ENCODE measurements at regions of chr19 and their contacts with region 1.

Region 1: DNA sequence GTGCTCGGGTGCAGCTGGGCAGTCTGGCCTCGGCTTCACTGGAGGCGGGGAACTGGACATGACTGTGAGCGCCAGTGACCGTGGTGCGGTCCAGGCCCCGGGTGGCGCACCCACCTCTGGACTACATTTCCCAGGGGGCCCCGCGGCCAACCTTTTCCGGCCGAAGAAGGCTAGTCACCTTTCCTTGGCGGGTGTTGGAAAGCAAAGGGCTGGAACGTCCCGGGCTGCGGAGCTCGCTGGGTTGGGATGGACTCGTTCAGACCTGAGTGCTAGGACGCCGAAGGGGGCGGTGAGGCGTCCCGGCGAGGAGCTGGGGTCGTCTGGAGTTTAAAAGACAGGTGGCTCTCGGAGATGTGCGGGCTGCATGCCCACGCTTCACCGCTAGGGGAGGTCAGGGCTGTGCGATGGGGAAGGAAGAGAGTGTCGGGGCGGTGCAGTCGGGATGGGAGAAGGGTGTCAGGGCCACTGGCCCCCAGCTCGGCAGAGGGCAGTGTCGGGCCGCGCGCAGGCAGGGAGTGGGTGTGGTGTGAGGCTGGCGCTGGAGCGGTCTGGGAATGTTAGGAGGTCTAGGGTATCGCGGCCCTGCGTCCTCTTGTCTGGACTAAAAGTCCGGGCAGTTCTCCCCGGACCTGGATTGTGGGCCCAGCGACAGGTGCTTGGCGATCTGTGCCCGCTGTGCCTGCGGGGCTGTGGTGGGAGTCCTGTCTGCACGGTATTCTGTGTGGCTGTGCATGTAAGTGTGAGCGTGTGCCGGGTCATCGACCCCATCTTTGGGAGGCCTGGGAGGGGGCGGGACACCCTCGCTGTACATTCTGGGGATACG is 57.1 kb downstream of the ZNF568 start:
- DNase-seq: peak; percentile 76 to 85 (median 77)
- H3K4me3 ChIP-seq: peak overlapping the region; percentile 80 to 86
- H3K4me3 Mint-ChIP-seq: peak overlapping the region; percentile 91 to 98 (median 96)
- H3K27ac ChIP-seq: peak overlapping the region; percentile 68
- H3K27ac Mint-ChIP-seq: peak overlapping the region; percentile 82 to 97 (median 94)
- H3K4me1 ChIP-seq: peaks cover 16% of the 10 kb centered on the region
- H3K4me1 Mint-ChIP-seq: peaks cover 8 to 22% (median 12%) of the 10 kb centered on the region in 4 donors
- H3K27me3 ChIP-seq: no peaks in the 10 kb centered on the region
- H3K27me3 Mint-ChIP-seq: no peaks in the 10 kb centered on the region

Region 2: DNA sequence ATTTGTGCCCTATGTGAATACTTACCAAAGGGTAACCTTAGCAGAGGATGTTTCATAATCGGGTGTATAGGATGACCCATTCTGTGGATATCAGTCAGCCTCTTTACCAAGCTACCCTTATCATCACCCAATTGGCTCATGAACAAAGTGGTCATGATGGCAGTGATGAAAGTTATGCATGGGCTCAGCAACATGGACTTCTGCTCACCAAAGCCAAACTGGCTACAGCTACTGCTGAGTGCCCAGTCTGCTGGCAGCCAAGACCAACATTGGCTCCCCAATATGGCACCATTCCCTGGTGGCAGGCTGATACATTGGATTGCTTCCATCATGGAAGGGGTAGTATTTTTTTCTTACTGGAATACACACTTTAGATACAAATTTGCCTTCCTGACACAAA is 300.9 kb before region 1 on chr19:
- CTCF ChIA-PET with region 1: no interaction called
- POLR2A ChIA-PET with region 1: no interaction called
- intact Hi-C with region 1: no loop called
- DNase-seq: no peak
- H3K4me3 ChIP-seq: no peak overlapping the region
- H3K4me3 Mint-ChIP-seq: no peak overlapping the region
- H3K27ac ChIP-seq: no peak overlapping the region
- H3K27ac Mint-ChIP-seq: no peak overlapping the region
- H3K4me1 ChIP-seq: peaks cover 18% of the 10 kb centered on the region
- H3K4me1 Mint-ChIP-seq: peaks cover 9 to 24% (median 13%) of the 10 kb centered on the region in 4 donors
- H3K27me3 ChIP-seq: no peaks in the 10 kb centered on the region
- H3K27me3 Mint-ChIP-seq: no peaks in the 10 kb centered on the region

Region 3: DNA sequence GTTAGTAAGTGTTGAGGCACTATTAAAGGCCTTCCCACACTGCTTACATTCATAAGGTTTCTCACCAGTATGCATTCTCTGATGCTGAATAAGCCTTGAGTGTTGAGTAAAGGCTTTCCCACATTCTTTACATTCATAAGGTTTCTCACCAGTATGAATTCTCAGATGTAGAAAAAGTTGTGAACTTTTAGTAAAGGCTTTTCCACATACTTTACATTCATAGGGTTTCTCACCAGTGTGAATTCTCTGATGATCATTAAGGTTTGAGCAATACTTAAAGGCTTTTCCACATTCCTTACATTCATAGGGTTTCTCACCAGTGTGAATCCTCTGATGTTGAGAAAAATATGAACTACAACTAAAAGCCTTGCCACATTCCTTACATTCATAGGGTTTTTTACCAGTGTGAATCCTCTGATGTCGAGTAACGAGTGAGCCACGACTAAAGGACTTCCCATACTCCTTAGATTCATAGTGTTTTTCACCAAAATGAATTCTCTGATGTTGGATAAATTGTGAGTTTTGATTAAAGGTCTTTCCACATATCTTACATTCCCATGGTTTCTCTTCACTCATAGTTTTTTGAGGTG is 81.4 kb before region 1 on chr19:
- CTCF ChIA-PET with region 1: no interaction called
- POLR2A ChIA-PET with region 1: no interaction called
- intact Hi-C with region 1: no loop called
- DNase-seq: no peak
- H3K4me3 ChIP-seq: peak overlapping the region in 1 of 2 donors; percentile 10
- H3K4me3 Mint-ChIP-seq: no peak overlapping the region
- H3K27ac ChIP-seq: no peak overlapping the region
- H3K27ac Mint-ChIP-seq: no peak overlapping the region
- H3K4me1 ChIP-seq: no peaks in the 10 kb centered on the region
- H3K4me1 Mint-ChIP-seq: peaks cover 0 to 3% (median 0%) of the 10 kb centered on the region in 4 donors
- H3K27me3 ChIP-seq: no peaks in the 10 kb centered on the region
- H3K27me3 Mint-ChIP-seq: no peaks in the 10 kb centered on the region

Region 4: GRCh38 chr19:36939153-36939552 is 34.1 kb before region 1 on chr19:
- CTCF ChIA-PET with region 1: no interaction called
- POLR2A ChIA-PET with region 1: no interaction called
- intact Hi-C with region 1: no loop called
- DNase-seq: no peak
- H3K4me3 ChIP-seq: no peak overlapping the region
- H3K4me3 Mint-ChIP-seq: no peak overlapping the region
- H3K27ac ChIP-seq: no peak overlapping the region
- H3K27ac Mint-ChIP-seq: no peak overlapping the region
- H3K4me1 ChIP-seq: no peaks in the 10 kb centered on the region
- H3K4me1 Mint-ChIP-seq: peaks cover 0 to 1% (median 0%) of the 10 kb centered on the region in 4 donors
- H3K27me3 ChIP-seq: no peaks in the 10 kb centered on the region
- H3K27me3 Mint-ChIP-seq: no peaks in the 10 kb centered on the region

Region 5: GRCh38 chr19:36962346-36962745 is 10.9 kb before region 1 on chr19:
- CTCF ChIA-PET with region 1: no interaction called
- POLR2A ChIA-PET with region 1: no interaction called
- intact Hi-C with region 1: no loop called
- DNase-seq: no peak
- H3K4me3 ChIP-seq: peak overlapping the region in 1 of 2 donors; percentile 17
- H3K4me3 Mint-ChIP-seq: no peak overlapping the region
- H3K27ac ChIP-seq: no peak overlapping the region
- H3K27ac Mint-ChIP-seq: no peak overlapping the region
- H3K4me1 ChIP-seq: no peaks in the 10 kb centered on the region
- H3K4me1 Mint-ChIP-seq: no peaks in the 10 kb centered on the region
- H3K27me3 ChIP-seq: no peaks in the 10 kb centered on the region
- H3K27me3 Mint-ChIP-seq: no peaks in the 10 kb centered on the region

Region 6: DNA sequence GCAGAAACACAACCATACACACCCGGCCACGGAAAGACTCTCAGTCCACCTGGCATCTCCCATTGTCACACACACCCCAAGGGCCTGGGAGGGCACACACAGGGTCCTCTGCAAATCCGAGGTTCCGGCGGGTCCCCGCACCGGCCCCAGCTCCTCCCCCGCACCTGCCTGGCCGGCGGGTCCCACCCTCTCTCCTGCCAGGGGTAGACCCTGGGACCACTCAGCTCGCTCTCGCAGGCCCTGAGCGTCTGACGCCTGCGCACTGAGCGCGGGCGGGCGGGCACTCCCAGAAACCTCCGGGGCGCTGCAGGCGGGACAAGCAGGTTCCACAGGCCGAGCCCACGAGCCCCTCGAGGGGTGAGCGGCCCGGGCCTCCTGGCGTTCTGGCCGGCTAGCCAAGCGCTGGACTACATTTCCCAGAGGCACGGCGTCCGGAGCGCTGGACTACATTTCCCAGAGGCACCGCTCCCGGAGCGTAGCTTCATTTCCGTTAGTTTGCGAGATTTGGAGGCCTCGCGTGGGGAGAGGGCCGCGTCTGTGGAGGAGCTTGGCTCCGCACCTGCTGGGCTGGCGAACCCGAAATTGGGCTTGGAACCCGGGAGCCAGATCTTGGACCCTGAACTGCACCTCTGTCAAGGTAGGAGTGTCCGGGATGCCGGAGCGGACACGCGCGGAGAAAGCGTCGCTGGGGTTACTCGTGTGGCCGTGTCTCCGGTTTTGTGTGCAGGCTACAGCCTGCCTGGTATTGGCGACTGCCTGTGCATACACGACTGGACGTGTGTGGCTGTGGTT is 104.9 kb after region 1 on chr19 and contains the start of gene ZNF420:
- CTCF ChIA-PET with region 1: interaction called, 5 read pairs
- POLR2A ChIA-PET with region 1: interaction called, 4 read pairs
- intact Hi-C with region 1: loop called (anchors 1 kb)
- DNase-seq: peak; percentile 85 to 92 (median 87)
- H3K4me3 ChIP-seq: peak within 1 kb of the TSS; percentile 61 to 88
- H3K4me3 Mint-ChIP-seq: peak within 1 kb of the TSS; percentile 90 to 100 (median 98)
- H3K27ac ChIP-seq: peak within 1 kb of the TSS; percentile 73
- H3K27ac Mint-ChIP-seq: peak within 1 kb of the TSS; percentile 85 to 99 (median 95)
- H3K4me1 ChIP-seq: peaks cover 23% of the 10 kb centered on the region
- H3K4me1 Mint-ChIP-seq: peaks cover 22 to 43% (median 27%) of the 10 kb centered on the region in 4 donors
- H3K27me3 ChIP-seq: no peaks in the 10 kb centered on the region
- H3K27me3 Mint-ChIP-seq: no peaks in the 10 kb centered on the region
- total RNA-seq, gene ZNF420: 25.0 to 28.6 TPM

Region 7: GRCh38 chr19:37217855-37218591 is 244.8 kb after region 1 on chr19 and contains the start of gene ZNF383:
- CTCF ChIA-PET with region 1: interaction called, 5 read pairs
- POLR2A ChIA-PET with region 1: interaction called, 6 read pairs
- intact Hi-C with region 1: loop called (anchors 5 kb)
- DNase-seq: peak; percentile 80 to 87 (median 83)
- H3K4me3 ChIP-seq: peak within 1 kb of the TSS; percentile 85 to 99
- H3K4me3 Mint-ChIP-seq: peak within 1 kb of the TSS; percentile 89 to 98 (median 91)
- H3K27ac ChIP-seq: peak within 1 kb of the TSS; percentile 80
- H3K27ac Mint-ChIP-seq: peak within 1 kb of the TSS; percentile 88 to 98 (median 96)
- H3K4me1 ChIP-seq: peaks cover 16% of the 10 kb centered on the region
- H3K4me1 Mint-ChIP-seq: peaks cover 19 to 40% (median 31%) of the 10 kb centered on the region in 4 donors
- H3K27me3 ChIP-seq: no peaks in the 10 kb centered on the region
- H3K27me3 Mint-ChIP-seq: no peaks in the 10 kb centered on the region
- total RNA-seq, gene ZNF383: 32.0 to 34.0 TPM

Region 8: DNA sequence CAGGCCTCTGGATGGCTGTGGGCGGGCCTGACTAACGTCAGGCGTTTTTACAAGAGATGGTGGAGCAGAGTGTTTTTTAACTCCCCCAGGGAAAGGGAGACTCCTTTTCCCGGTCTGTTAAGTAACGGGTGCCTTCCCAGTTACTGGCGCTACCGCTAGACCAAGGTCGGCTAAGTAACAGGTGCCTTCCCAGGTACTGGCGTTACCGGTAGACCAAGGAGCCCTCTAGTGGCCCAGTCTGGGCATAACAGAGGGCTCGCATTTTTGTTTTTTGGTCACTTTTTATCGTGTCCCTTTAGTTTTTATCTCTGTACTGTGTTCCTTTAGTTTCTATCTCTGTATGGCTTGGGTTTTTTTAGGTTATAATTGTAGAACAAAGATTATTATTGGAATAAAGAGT is 254.8 kb after region 1 on chr19:
- CTCF ChIA-PET with region 1: no interaction called
- POLR2A ChIA-PET with region 1: no interaction called
- intact Hi-C with region 1: loop called (anchors 1 kb)
- DNase-seq: peak in 4 of 5 donors; percentile 15 to 40 (median 28)
- H3K4me3 ChIP-seq: no peak overlapping the region
- H3K4me3 Mint-ChIP-seq: no peak overlapping the region
- H3K27ac ChIP-seq: no peak overlapping the region
- H3K27ac Mint-ChIP-seq: no peak overlapping the region
- H3K4me1 ChIP-seq: no peaks in the 10 kb centered on the region
- H3K4me1 Mint-ChIP-seq: peaks cover 0 to 7% (median 3%) of the 10 kb centered on the region in 4 donors
- H3K27me3 ChIP-seq: no peaks in the 10 kb centered on the region
- H3K27me3 Mint-ChIP-seq: no peaks in the 10 kb centered on the region

Region 9: GRCh38 chr19:37779127-37780005 is 806.1 kb after region 1 on chr19 and contains the start of gene ZNF573:
- CTCF ChIA-PET with region 1: no interaction called
- POLR2A ChIA-PET with region 1: no interaction called
- intact Hi-C with region 1: loop called (anchors 1 kb)
- DNase-seq: peak; percentile 87 to 99 (median 91)
- H3K4me3 ChIP-seq: peak within 1 kb of the TSS; percentile 74 to 89
- H3K4me3 Mint-ChIP-seq: peak within 1 kb of the TSS; percentile 90 to 99 (median 94)
- H3K27ac ChIP-seq: peak within 1 kb of the TSS; percentile 90
- H3K27ac Mint-ChIP-seq: peak within 1 kb of the TSS; percentile 86 to 100 (median 98)
- H3K4me1 ChIP-seq: peaks cover 18% of the 10 kb centered on the region
- H3K4me1 Mint-ChIP-seq: peaks cover 24 to 46% (median 35%) of the 10 kb centered on the region in 4 donors
- H3K27me3 ChIP-seq: no peaks in the 10 kb centered on the region
- H3K27me3 Mint-ChIP-seq: no peaks in the 10 kb centered on the region
- total RNA-seq, gene ZNF573: 30.5 to 31.1 TPM

Measured in CD4-positive, alpha-beta memory T cell (primary cell).